ENCODE measurements at regions of chrX and their contacts with region 1.

Region 1: DNA sequence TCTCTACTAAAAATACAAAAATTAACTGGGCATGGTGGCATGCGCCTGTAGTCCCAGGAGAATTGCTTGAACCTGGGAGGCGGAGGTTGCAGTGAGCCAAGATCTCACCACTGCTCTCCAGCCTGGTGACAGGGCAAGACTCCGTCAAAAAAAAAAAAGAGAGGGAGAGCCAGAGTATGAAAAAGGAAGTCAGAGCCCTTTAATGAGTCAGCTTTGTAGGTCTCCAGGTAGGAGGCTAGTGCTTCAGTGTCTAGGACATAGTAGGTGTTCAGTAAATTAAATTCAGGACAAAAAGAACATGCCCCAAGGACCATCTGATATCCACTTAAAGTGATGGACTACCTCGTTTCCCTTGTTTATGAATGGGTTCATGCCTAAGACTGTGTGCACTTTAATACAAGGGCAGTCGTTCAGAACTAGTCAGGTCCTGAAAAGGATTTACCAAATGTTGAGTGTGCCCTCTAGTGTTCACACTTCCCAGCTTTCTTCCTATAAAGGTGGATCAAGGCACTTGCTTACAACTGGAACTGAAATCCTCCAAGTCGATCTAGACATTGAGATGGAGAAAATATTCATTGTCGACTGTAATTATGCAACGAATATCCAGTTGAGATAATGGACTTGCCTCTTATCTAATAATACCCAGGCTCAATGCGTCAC is 29.0 kb downstream of the F9 start:
- DNase-seq: no peak
- H3K4me3 ChIP-seq: no peak overlapping the region
- H3K27ac ChIP-seq: no peak overlapping the region
- H3K4me1 ChIP-seq: peaks cover 0 to 5% (median 0%) of the 10 kb centered on the region in 6 donors
- H3K27me3 ChIP-seq: peaks cover 0 to 8% (median 0%) of the 10 kb centered on the region in 7 donors
- CTCF ChIP-seq: peak in 9 of 11 experiments; percentile 9 to 46 (median 37)
- POLR2A ChIP-seq: no peak

Region 2: DNA sequence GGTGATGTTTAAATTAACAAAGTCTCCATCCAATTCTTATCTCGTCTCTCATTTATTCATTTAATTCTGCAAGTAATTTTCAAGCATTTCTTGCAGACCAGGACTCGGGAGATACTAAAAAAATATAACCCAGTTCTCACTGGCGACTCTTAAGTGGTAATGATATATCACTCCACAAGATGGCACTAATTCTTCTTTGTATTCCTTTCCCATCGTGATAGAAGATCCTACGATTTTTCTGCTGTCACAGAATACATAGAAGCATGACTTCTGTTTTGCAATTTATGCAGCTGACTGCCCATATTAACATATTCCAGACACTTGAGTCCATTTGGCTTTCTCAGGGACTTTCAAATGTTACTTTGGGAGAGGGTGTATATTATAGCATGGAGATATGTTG is 784.0 kb before region 1 on chrX:
- intact Hi-C with region 1: loop called (anchors 5 kb)
- DNase-seq: no peak
- H3K4me3 ChIP-seq: no peak overlapping the region
- H3K27ac ChIP-seq: no peak overlapping the region
- H3K4me1 ChIP-seq: peaks cover 0 to 4% (median 0%) of the 10 kb centered on the region in 6 donors
- H3K27me3 ChIP-seq: no peaks in the 10 kb centered on the region
- CTCF ChIP-seq: peak in 8 of 11 experiments; percentile 5 to 51 (median 32)
- POLR2A ChIP-seq: no peak